ENCODE measurements at regions of chr3 and their contacts with region 1.

Region 1: DNA sequence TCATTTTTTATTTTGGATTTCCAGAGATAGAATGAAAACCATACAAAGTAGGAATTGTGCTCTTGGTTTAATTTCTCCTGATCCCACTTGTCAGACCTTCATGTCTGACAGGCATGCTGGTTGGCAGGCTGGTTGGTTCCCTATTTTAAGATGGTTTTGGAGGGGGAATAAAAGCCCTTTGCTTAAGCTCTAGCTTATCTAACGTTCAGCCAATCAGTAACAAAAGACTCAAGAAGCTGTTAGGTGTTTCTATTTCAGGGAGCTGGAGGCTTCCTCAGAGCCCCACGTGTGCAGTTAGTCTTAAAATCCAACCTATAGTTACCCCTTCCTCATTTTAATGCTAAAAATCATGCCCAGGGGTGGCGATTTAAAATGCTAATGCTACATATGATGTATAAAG is 40.5 kb upstream of the XIRP1 start:
- DNase-seq: no peak
- H3K4me3 Mint-ChIP-seq: no peak overlapping the region
- H3K27ac Mint-ChIP-seq: no peak overlapping the region
- H3K4me1 Mint-ChIP-seq: peaks cover 3% of the 10 kb centered on the region
- H3K27me3 Mint-ChIP-seq: peaks cover 8% of the 10 kb centered on the region

Region 2: DNA sequence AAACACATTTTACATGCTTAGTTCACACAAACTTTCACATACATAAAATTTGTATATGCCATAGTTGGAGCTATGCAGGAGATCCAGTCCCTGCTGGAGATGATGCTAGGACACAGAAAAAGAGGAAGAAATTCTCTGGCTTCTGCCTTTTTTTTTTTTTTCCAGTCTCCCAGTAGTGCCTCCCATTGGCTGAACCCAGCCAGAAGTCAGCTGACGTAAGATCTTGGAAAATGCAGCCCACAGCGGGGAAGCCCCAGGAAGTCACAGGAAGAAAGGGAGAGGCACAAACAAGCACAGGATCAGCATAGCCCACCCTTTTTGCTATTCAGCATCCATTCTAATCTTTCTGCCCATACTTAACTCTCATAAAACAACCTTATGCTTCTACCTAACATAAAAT is 219.6 kb before region 1 on chr3:
- CTCF ChIA-PET with region 1: no interaction called
- intact Hi-C with region 1: no loop called
- DNase-seq: no peak
- H3K4me3 Mint-ChIP-seq: no peak overlapping the region
- H3K27ac Mint-ChIP-seq: no peak overlapping the region
- H3K4me1 Mint-ChIP-seq: no peaks in the 10 kb centered on the region
- H3K27me3 Mint-ChIP-seq: peaks cover 4% of the 10 kb centered on the region

Region 3: GRCh38 chr3:39216176-39216790 is 16.6 kb before region 1 on chr3:
- CTCF ChIA-PET with region 1: interaction called, 3 read pairs
- intact Hi-C with region 1: loop called (anchors 2 kb)
- DNase-seq: no peak
- H3K4me3 Mint-ChIP-seq: no peak overlapping the region
- H3K27ac Mint-ChIP-seq: no peak overlapping the region
- H3K4me1 Mint-ChIP-seq: no peaks in the 10 kb centered on the region
- H3K27me3 Mint-ChIP-seq: peaks cover 12% of the 10 kb centered on the region

Region 4: DNA sequence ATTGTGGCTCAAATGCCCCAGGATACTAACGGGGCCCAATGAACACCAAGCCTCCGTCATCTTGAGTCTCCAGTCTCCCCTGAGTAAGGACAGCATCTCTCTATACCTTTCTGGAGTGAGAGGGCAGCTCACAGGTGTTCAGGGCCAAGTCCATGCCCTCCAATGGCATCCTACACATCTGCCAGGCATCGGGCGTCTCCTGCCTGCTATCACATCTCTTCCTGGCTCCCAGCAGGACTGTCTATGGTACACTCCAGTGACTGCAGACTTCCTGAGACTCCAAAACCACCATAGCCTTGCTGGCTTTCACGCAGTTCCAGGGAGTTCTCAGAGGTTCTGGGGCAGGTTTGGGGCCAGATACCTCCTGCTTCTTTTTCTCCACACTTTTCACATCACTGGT is 18.7 kb after region 1 on chr3:
- CTCF ChIA-PET with region 1: no interaction called
- intact Hi-C with region 1: no loop called
- DNase-seq: no peak
- H3K4me3 Mint-ChIP-seq: no peak overlapping the region
- H3K27ac Mint-ChIP-seq: no peak overlapping the region
- H3K4me1 Mint-ChIP-seq: peaks cover 18% of the 10 kb centered on the region
- H3K27me3 Mint-ChIP-seq: no peaks in the 10 kb centered on the region